ENCODE measurements at regions of chr4 and their contacts with region 1.

Region 1: DNA sequence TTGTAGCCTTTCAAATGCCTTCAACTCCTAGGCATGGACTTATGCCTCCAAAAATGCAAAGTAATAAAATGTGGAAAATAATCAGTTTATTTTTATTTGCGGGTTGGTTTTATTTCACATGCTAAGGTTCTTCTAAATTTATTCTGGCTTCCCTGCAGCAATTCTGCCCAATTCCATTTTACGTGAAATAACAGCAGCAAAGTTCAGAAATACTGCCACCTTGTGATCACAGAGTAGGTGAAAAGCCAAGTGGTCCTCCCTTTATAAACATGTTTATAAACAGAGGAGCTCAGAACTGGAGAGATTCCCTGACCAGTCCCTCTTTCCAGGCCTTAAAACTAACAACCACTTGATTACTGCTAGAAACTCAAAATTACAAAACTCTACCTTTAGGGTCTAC is 14.7 kb upstream of the DCHS2 start:
- DNase-seq: peak in 3 of 14 experiments; percentile 5 to 13 (median 8)
- ATAC-seq: no peak
- H3K4me3 ChIP-seq: no peak overlapping the region
- H3K4me3 Mint-ChIP-seq: no peak overlapping the region
- H3K27ac ChIP-seq: no peak overlapping the region
- H3K27ac Mint-ChIP-seq: no peak overlapping the region
- H3K4me1 ChIP-seq: no peaks in the 10 kb centered on the region
- H3K4me1 Mint-ChIP-seq: no peaks in the 10 kb centered on the region
- H3K27me3 ChIP-seq: peaks cover 0 to 4% of the 10 kb centered on the region in 2 experiments
- H3K27me3 Mint-ChIP-seq: peaks cover 50% of the 10 kb centered on the region
- CTCF ChIP-seq: peak; percentile 17

Region 2: DNA sequence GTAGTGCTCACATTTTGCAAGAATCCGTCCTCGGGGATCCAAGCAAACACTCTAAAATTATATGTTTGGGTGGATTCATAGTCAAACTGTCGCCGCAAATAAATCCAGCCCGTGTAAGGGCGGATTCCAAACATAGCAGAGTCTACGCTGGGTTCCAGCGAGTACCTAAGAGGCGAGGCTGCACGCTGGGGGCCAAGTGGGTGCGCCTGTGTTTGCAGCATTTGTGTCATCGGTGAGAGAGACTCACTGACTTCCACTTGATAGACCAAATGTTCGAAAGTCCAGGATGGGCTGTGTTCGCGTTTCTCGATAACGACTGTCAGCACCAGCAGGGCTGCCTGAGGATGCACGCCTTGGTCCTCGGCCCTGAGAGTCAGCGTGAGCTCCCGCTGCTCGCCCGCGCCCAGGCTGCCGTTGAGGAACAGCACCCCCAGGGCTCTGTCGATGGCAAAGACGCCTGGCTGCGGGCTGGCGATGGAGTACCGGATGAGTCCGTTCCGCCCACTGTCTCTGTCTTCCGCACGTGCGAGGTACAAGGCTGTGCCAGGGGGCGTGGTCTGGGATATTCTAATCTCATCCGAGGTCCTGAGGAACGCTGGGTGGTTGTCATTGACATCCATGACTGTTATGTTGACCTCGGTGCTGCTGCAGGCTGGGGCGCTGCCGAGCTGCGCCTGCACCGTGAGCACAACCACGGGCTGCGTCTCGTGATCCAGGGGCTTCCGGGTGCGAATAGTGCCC is 173.4 kb before region 1 on chr4:
- CTCF ChIA-PET with region 1: no interaction called
- POLR2A ChIA-PET with region 1: no interaction called
- intact Hi-C with region 1: loop called (anchors 5 to 10 kb)
- DNase-seq: peak; percentile 4 to 79 (median 48)
- ATAC-seq: peak; percentile 88
- H3K4me3 ChIP-seq: peak overlapping the region; percentile 55
- H3K4me3 Mint-ChIP-seq: peak overlapping the region; percentile 84
- H3K27ac ChIP-seq: no peak overlapping the region
- H3K27ac Mint-ChIP-seq: no peak overlapping the region
- H3K4me1 ChIP-seq: peaks cover 10% of the 10 kb centered on the region
- H3K4me1 Mint-ChIP-seq: no peaks in the 10 kb centered on the region
- H3K27me3 ChIP-seq: peaks cover 4 to 18% of the 10 kb centered on the region in 2 experiments
- H3K27me3 Mint-ChIP-seq: peaks cover 34% of the 10 kb centered on the region
- CTCF ChIP-seq: no peak

Measured in CD4-positive, alpha-beta T cell (primary cell).